Naive thymus-derived CD4-positive, alpha-beta T cell (primary cell): ENCODE measurements at regions of chr3 and their contacts with region 1.

Region 1: DNA sequence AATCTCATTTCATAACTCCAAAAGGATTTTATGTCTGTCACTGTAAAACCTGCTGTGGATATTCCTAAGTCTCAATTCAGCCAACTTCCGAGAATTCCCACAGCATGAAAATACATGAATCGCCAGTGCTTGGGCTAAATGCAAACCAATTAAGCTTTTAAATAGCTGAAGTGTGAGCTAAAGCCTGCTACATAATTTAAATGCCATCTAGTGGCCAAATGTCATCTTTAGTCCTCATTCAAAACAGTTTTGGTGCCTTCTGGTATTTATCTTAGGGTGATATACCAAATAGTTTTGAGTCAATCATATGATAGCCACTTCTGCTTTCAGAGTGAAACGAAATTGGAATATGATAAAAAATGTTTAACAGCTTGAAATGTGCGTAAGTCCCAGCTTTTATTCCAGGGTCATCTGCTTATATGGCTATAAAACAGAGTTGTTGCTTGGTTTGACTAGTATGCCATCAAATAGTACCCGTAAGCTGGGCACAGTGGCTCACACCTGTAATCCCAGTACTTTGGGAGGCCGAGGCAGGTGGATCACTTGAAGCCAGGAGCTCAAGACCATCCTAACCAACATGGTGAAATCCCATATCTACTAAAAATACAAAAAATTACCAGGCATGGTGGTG is 41.8 kb upstream of the CCNL1 start:
- DNase-seq: peak in 5 of 9 donors; percentile 10 to 37 (median 16)
- ATAC-seq: peak; percentile 51
- H3K4me3 ChIP-seq: no peak overlapping the region
- H3K4me3 Mint-ChIP-seq: no peak overlapping the region
- H3K27ac ChIP-seq: no peak overlapping the region
- H3K27ac Mint-ChIP-seq: no peak overlapping the region
- H3K4me1 ChIP-seq: no peaks in the 10 kb centered on the region
- H3K4me1 Mint-ChIP-seq: no peaks in the 10 kb centered on the region
- H3K27me3 ChIP-seq: no peaks in the 10 kb centered on the region
- H3K27me3 Mint-ChIP-seq: peaks cover 0 to 11% (median 0%) of the 10 kb centered on the region in 5 donors

Region 2: GRCh38 chr3:157239082-157239704 is 37.4 kb after region 1 on chr3:
- CTCF ChIA-PET with region 1: interaction called, 4 read pairs
- POLR2A ChIA-PET with region 1: no interaction called
- intact Hi-C with region 1: loop called in 1 of 2 experiments (anchors 1 kb)
- DNase-seq: peak; percentile 42 to 72 (median 58)
- ATAC-seq: peak; percentile 100
- H3K4me3 ChIP-seq: no peak overlapping the region
- H3K4me3 Mint-ChIP-seq: no peak overlapping the region
- H3K27ac ChIP-seq: no peak overlapping the region
- H3K27ac Mint-ChIP-seq: no peak overlapping the region
- H3K4me1 ChIP-seq: no peaks in the 10 kb centered on the region
- H3K4me1 Mint-ChIP-seq: peaks cover 0 to 6% (median 4%) of the 10 kb centered on the region in 7 donors
- H3K27me3 ChIP-seq: no peaks in the 10 kb centered on the region
- H3K27me3 Mint-ChIP-seq: peaks cover 0 to 8% (median 0%) of the 10 kb centered on the region in 5 donors

Region 3: DNA sequence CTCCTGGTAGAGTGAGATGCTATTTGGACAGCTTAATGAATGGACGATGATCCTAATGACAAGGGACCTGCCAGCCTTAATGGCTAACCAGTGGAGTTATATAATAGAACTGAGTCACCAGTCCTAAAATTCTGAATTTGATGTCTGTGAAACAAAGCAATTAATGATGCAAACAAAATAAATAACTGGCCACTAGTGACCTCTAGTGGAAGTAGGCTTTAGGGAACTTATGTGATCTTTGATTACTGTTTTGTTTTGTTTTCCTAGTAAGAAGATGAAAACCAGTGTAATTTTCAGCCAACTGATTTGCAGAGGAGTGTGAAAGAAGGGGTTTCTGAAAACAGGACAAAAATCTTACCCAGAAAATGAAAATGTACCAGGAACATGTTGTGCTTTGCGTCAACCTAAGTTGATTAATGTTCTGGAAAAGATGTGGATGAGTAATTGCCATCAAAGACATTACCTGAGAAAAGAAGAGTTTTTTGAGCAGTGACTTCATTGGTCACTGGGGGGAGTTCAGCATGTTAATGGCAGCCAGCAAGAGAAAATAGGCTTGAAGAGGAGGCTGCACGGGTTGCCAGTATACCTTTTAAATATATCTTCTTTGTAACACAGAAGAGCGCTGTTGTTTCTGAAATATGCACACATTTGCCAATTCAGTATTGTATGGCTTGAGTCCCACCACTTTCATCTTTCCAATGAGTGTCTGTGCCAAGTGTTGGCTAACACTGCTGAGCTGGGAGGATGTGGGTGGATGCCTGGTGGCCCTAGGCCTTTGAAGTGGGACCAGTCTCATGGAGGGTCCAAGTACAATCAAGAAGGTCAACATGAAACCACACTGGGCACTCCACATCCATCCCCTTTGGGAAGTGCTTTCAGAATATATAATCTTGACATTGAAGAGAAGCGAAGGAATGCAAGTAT is 292.1 kb after region 1 on chr3:
- CTCF ChIA-PET with region 1: no interaction called
- POLR2A ChIA-PET with region 1: no interaction called
- intact Hi-C with region 1: loop called in 1 of 2 experiments (anchors 10 kb)
- DNase-seq: no peak
- ATAC-seq: peak; percentile 37
- H3K4me3 ChIP-seq: no peak overlapping the region
- H3K4me3 Mint-ChIP-seq: no peak overlapping the region
- H3K27ac ChIP-seq: no peak overlapping the region
- H3K27ac Mint-ChIP-seq: no peak overlapping the region
- H3K4me1 ChIP-seq: no peaks in the 10 kb centered on the region
- H3K4me1 Mint-ChIP-seq: peaks cover 0 to 3% (median 0%) of the 10 kb centered on the region in 7 donors
- H3K27me3 ChIP-seq: peaks cover 0 to 2% of the 10 kb centered on the region in 2 donors
- H3K27me3 Mint-ChIP-seq: peaks cover 27 to 42% (median 30%) of the 10 kb centered on the region in 5 donors

Region 4: DNA sequence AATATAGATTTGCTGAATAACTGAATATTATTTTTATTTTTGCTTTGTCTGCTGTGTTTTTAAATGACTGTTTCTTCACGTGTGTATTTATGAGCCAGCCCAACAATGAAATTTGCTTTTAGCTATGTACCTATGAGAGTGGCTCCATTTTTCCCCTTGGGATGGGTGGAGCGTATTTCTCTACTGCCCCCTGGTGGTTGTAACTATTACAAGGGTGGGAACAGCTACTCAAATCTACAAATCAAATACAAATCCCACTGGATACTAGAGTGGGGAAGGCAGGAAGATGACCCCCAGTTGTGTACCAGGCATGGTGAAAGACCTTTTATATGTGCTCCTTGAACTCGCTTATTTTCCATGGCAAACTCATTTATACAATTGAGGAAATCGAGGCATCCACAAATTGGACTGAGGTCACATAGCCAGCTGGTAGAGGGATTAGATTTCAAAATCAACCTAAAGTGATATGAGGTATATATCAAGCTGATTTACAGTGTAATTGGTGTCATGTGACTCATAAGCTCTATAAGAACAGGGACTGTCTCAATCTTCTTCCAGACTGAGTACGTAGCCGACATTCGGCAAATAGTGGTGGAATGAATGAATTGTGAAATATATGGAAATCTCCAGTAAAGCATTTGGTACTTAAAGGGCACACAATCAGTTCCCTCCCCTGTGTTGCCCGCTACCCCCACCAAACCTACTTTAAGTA is 371.0 kb after region 1 on chr3:
- CTCF ChIA-PET with region 1: no interaction called
- POLR2A ChIA-PET with region 1: no interaction called
- intact Hi-C with region 1: loop called in 1 of 2 experiments (anchors 10 kb)
- DNase-seq: peak in 2 of 9 donors; percentile 5 to 9
- ATAC-seq: no peak
- H3K4me3 ChIP-seq: no peak overlapping the region
- H3K4me3 Mint-ChIP-seq: no peak overlapping the region
- H3K27ac ChIP-seq: no peak overlapping the region
- H3K27ac Mint-ChIP-seq: no peak overlapping the region
- H3K4me1 ChIP-seq: no peaks in the 10 kb centered on the region
- H3K4me1 Mint-ChIP-seq: peaks cover 0 to 4% (median 0%) of the 10 kb centered on the region in 7 donors
- H3K27me3 ChIP-seq: no peaks in the 10 kb centered on the region
- H3K27me3 Mint-ChIP-seq: peaks cover 9 to 28% (median 14%) of the 10 kb centered on the region in 5 donors